PC-9 (cell line): ENCODE measurements at regions of chr16 and their contacts with region 1.

Region 1: GRCh38 chr16:67871256-67871655 is 1.6 kb upstream of the EDC4 start:
- DNase-seq: no peak
- H3K4me3 ChIP-seq: no peak overlapping the region
- H3K27ac ChIP-seq: no peak overlapping the region
- H3K4me1 ChIP-seq: peaks cover 11% of the 10 kb centered on the region; the same call in 1 of the 2 replicates
- H3K27me3 ChIP-seq: no peaks in the 10 kb centered on the region
- CTCF ChIP-seq: no peak

Region 2: DNA sequence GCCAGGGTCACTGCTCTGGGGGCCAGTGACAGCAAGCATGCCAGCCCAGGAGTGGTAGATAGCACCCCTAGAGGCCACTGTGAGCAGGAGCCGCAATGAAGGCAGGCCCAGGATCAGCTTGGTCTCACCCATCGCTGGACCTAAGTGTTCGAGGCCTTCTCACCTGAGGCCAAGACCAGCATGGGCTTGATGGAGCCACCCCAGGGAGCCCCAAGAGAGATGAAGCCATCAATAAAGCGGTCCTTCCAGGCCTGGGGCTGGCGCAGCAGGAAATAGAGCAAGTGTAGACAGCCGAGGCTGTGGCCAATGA is 70.9 kb after region 1 on chr16:
- CTCF ChIA-PET with region 1: no interaction called
- POLR2A ChIA-PET with region 1: interaction called, 28 read pairs
- intact Hi-C with region 1: no loop called
- DNase-seq: peak in 1 of 2 experiments; percentile 38
- H3K4me3 ChIP-seq: no peak overlapping the region
- H3K27ac ChIP-seq: no peak overlapping the region
- H3K4me1 ChIP-seq: peaks cover 3% of the 10 kb centered on the region; the same call in 1 of the 2 replicates
- H3K27me3 ChIP-seq: no peaks in the 10 kb centered on the region
- CTCF ChIP-seq: peak; percentile 76